ENCODE measurements at regions of chr11 and their contacts with region 1.

Region 1: DNA sequence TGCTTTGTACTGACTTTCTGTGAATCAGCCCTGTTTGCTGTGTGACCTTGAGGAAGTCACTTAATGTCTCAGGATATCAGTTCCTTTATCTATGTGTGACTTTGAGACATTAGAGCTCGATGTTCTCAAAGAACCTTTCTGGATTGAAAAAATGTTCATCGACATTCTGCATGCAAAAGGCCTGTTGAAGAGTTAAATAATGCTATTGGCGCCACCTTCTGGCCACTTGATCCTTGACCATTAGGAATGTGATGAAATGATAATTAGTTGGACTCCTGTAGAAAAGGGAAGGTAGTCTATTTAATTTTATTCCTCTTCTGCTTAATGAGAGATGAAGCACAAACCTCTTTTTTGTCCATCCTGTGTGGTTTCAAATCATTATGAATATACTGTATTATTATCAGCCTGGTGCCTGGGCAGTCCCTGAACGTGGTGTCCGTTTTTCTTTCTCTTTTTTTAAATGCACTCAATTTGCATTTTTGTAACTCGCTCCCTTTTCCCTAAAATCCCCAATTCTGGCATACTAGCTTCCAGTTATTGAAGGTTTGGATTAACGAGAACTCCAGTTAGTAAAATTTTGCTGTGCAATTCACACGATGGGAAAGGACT is 20.7 kb downstream of the ELF5 start:
- DNase-seq: peak; percentile 60
- ATAC-seq: no peak
- H3K4me3 ChIP-seq: no peak overlapping the region
- H3K27ac ChIP-seq: no peak overlapping the region
- H3K4me1 ChIP-seq: peaks cover 37 to 56% of the 10 kb centered on the region in 2 experiments
- H3K27me3 ChIP-seq: no peaks in the 10 kb centered on the region
- CTCF ChIP-seq: peak; percentile 50 to 85 (median 79)
- POLR2A ChIP-seq: no peak
- RAD21 ChIP-seq: peak; percentile 85

Region 2: DNA sequence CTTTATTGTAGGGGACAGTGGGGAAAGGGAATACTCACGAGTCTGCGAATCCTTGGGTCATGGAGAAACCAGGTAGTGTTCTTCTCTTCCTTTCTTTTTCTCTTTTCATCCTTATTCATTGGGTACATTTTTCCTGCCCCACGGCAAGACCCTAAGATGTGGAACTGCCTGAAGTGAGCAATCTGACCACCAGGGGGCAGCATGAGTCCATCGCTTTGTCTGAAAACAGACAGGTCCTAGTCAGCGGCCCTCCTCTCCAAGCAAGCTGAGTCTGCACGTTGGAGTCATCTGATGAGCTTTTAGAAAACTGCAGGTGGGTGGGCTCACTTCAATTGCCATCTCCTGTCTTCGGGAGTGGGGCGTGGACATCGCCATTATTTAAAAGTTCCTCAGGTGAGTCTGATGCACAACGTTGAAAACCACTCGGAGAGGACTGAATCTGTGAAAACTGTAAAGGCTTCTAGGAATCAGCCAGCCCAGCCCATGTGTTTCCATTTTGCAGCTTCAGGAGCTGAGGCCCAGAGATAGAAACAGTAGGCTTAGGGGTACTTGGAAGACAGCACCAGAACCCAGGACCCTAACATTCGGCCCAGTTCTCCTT is 684.6 kb before region 1 on chr11:
- CTCF ChIA-PET with region 1: no interaction called
- POLR2A ChIA-PET with region 1: no interaction called
- RAD21 ChIA-PET with region 1: no interaction called
- intact Hi-C with region 1: loop called (anchors 10 kb)
- DNase-seq: peak; percentile 75
- ATAC-seq: peak; percentile 100
- H3K4me3 ChIP-seq: no peak overlapping the region
- H3K27ac ChIP-seq: no peak overlapping the region
- H3K4me1 ChIP-seq: peaks cover 0 to 6% of the 10 kb centered on the region in 2 experiments; a peak in 1 of 4 replicates
- H3K27me3 ChIP-seq: no peaks in the 10 kb centered on the region
- CTCF ChIP-seq: peak; percentile 78 to 93 (median 90); a peak in 5 of 6 replicates
- POLR2A ChIP-seq: no peak
- RAD21 ChIP-seq: peak; percentile 88

Region 3: DNA sequence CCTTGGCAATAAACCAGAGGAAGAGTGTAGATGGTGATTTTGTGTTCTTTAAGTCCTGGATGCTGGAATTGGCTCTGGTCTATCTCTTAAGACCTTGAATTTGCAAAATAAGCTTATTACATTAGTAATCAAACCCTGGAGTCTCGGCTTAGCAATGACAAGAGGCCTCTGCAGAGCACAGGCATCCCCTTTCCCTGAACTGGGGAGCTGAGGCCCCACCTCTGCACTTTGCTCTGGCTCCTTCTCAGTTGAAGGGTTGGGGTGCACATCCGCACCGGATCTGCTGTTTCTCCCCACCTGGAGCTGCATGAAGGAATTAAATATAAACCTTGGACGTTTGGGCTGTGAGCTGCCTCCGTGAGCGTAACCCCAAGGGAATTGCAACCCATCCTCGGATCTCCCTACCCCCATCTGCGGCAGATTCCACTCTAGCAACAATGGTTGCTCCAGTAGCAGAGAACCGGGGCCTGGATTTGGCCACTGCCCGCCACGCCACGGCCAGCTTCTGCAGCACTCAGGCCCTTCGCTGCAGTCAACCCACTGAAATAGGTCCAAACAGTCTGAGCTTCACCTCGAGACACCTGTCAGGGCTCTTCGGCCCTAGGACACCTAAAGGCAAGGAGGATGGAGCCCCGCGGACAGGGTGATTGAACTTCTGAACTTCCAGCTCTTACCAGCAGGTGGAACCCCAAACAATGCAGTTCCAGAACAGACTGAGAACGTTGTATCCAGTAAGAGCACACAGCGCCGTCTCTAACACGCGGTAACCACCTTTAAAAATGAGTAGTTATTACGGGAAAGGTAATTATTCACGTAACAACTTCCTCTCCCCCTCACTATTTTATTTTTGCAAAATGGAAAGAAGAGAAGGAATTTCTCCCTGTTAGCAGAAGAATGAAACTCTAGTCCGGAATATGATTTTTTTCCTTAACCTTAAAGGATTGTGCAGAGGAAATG is 496.1 kb before region 1 on chr11:
- CTCF ChIA-PET with region 1: no interaction called
- POLR2A ChIA-PET with region 1: no interaction called
- RAD21 ChIA-PET with region 1: no interaction called
- intact Hi-C with region 1: loop called (anchors 10 kb)
- DNase-seq: peak; percentile 83
- ATAC-seq: peak; percentile 96
- H3K4me3 ChIP-seq: peak overlapping the region; percentile 22 to 47
- H3K27ac ChIP-seq: no peak overlapping the region
- H3K4me1 ChIP-seq: peaks cover 5 to 21% of the 10 kb centered on the region in 2 experiments; a peak in 3 of 4 replicates
- H3K27me3 ChIP-seq: no peaks in the 10 kb centered on the region
- CTCF ChIP-seq: peak; percentile 76 to 90 (median 79)
- POLR2A ChIP-seq: no peak
- RAD21 ChIP-seq: peak; percentile 94

Region 4: DNA sequence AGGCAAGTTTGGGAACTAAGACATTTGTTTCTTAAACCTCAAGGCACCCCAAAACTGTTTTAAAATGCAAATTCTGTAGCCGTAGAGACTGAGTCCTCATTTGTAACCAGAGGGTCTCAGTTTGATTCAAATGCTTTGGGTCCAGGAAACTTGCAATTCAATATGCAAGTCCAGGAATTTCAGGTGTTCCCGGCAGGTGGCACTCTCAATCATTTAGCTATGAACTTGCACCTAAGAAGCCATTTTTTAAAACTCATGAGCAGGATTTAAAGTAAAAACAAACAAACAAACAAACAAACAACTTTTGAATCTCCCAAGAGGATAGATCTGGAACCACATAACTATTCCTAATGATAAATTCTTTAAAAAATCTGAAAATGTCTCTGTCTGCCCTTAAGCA is 126.4 kb before region 1 on chr11:
- CTCF ChIA-PET with region 1: interaction called, 45 read pairs
- POLR2A ChIA-PET with region 1: no interaction called
- RAD21 ChIA-PET with region 1: interaction called, 4 to 14 read pairs
- intact Hi-C with region 1: loop called (anchors 1 kb)
- DNase-seq: peak; percentile 73
- ATAC-seq: peak; percentile 66
- H3K4me3 ChIP-seq: no peak overlapping the region
- H3K27ac ChIP-seq: no peak overlapping the region
- H3K4me1 ChIP-seq: peaks cover 5 to 7% of the 10 kb centered on the region in 2 experiments; a peak in 3 of 4 replicates
- H3K27me3 ChIP-seq: no peaks in the 10 kb centered on the region
- CTCF ChIP-seq: peak; percentile 70 to 89 (median 80)
- POLR2A ChIP-seq: no peak
- RAD21 ChIP-seq: peak; percentile 82

Region 5: DNA sequence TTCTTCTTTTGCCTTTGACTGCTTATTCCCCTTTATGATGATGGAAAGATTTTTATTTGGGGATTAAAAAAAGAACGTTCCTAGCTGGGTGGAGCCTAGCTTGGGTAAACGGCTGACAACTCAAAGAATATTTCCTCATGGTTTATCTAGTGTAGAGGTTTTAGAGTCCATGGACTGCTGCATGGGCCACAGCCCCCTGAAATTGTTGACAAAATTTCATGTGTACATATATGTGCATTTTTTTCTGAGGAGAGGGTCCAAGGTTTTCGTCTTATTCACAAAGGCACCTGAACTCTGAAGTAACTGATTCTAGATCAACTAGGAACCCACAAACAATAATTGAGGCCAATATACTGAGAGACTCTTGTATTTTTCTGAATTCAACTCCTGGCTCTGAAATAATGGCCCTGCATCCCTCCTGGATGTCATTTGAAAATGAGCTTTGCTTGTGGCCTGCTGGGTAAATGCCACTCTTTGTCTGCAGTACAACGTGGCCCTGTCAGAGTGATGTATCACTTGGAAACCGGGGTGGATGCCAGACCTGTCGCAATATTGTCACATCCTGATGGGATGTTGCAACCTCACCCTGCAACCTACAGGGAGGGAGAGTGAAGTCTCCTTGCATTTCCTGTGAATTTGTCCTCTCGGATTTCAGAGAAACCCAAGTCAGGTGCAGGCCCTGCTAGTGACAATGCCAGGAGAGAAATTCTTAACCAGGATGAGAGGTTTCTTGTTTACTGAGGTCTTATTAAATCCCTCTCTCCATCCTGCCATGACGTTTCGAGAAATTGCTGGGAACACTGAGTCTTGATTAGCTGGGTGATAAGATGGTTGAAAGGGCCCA is 161.8 kb after region 1 on chr11:
- CTCF ChIA-PET with region 1: no interaction called
- POLR2A ChIA-PET with region 1: no interaction called
- RAD21 ChIA-PET with region 1: no interaction called
- intact Hi-C with region 1: no loop called
- DNase-seq: peak; percentile 81
- ATAC-seq: peak; percentile 50
- H3K4me3 ChIP-seq: no peak overlapping the region
- H3K27ac ChIP-seq: peak overlapping the region; percentile 50
- H3K4me1 ChIP-seq: peaks cover 35 to 68% of the 10 kb centered on the region in 2 experiments
- H3K27me3 ChIP-seq: no peaks in the 10 kb centered on the region
- CTCF ChIP-seq: no peak
- POLR2A ChIP-seq: no peak
- RAD21 ChIP-seq: peak; percentile 25; the same call in 1 of the 2 replicates

Region 6: DNA sequence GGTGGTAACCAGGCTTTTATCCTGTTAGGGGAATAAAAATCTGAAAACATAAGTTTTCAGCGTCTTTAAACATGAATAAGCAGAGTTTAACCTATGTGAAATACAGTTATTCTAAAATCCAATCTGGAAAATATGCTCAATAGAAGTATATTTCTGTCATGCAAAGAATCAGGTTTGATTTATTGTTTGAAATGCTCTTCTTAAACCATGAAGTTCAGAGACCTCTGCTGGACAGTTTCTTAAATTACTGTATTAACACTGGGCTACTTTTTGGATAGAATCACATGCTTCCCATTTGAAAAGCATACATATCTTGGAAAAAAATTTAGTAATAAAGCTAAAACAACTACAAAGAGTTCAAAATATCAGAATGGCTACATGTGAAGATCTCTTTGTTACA is 397.9 kb after region 1 on chr11:
- CTCF ChIA-PET with region 1: interaction called, 4 read pairs
- POLR2A ChIA-PET with region 1: no interaction called
- RAD21 ChIA-PET with region 1: no interaction called
- intact Hi-C with region 1: loop called (anchors 5 kb)
- DNase-seq: peak; percentile 56
- ATAC-seq: 0 out of 2 replicates have a peak, but pooled peaks have one; percentile 46
- H3K4me3 ChIP-seq: no peak overlapping the region
- H3K27ac ChIP-seq: no peak overlapping the region
- H3K4me1 ChIP-seq: peaks cover 5 to 10% of the 10 kb centered on the region in 2 experiments; a peak in 2 of 4 replicates
- H3K27me3 ChIP-seq: no peaks in the 10 kb centered on the region
- CTCF ChIP-seq: peak; percentile 40 to 83 (median 67)
- POLR2A ChIP-seq: no peak
- RAD21 ChIP-seq: peak; percentile 90

Measured in HCT116 (cell line).